ENCODE measurements at regions of chr16 and their contacts with region 1.

Region 1: GRCh38 chr16:3611146-3611975 is at the start of gene SLX4:
- DNase-seq: peak; percentile 88 to 97 (median 95)
- ATAC-seq: peak; percentile 92
- H3K4me3 ChIP-seq: peak within 1 kb of the TSS; percentile 99
- H3K4me3 Mint-ChIP-seq: peak within 1 kb of the TSS; percentile 93 to 100 (median 99)
- H3K27ac ChIP-seq: peak within 1 kb of the TSS; percentile 90
- H3K27ac Mint-ChIP-seq: peak within 1 kb of the TSS; percentile 92 to 99 (median 98)
- H3K4me1 ChIP-seq: peaks cover 18 to 21% of the 10 kb centered on the region in 2 donors
- H3K4me1 Mint-ChIP-seq: peaks cover 37 to 70% (median 62%) of the 10 kb centered on the region in 7 donors
- H3K27me3 ChIP-seq: no peaks in the 10 kb centered on the region
- H3K27me3 Mint-ChIP-seq: no peaks in the 10 kb centered on the region
- total RNA-seq, gene SLX4: 7.1 to 12.5 (median 8.5) TPM

Region 2: DNA sequence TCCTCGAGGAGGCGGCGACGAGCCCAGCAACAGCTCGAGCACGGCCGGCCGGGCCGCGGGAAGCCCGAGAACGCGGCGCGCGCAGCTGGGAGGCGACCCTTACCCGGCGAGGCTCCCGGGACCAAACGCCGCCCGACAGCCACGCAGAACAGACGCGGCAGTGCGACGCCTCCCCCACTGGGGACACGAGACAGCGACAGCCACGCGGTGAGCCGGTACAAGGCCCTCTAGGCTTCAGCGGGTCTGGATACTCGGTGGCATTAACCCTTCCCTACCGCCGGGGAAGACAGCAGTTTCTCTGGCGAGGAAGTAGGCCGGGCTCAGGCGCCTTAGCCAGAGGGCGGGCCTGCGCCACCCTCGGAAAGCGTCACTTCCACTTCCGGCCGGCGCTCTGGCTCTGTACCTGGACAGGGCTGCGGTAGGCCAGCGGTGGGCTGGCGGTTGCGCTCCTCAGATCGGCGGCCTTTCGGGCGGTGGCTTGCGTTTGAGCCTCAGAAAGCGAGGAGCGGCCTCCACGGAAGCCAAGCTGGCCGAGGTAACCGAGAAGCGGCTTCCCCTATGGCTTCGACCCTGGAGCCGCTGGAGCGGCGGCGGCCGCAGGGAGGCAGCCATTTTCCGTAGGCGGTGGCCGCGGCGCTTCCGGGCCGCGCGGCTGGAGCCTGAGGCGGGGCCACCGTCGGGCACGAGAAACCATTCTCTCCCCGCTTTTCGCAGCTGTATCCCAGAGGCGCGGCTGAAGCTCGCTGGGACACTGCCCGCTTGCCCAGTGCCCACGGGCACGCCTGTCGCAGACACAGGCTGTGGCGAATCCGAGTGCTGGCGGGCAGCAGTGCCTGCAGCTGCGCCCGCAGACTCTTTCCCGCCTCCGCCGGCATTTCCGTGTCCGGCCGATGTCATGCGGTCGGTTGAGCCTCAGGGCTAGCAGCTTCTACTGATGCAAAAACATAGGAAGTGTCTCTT is 306.0 kb before region 1 on chr16 and contains the starts of genes TIGD7 and ZNF75A:
- CTCF ChIA-PET with region 1: no interaction called
- POLR2A ChIA-PET with region 1: no interaction called
- intact Hi-C with region 1: loop called in 1 of 2 experiments (anchors 1 kb)
- DNase-seq: peak; percentile 69 to 89 (median 85)
- ATAC-seq: peak; percentile 96
- H3K4me3 ChIP-seq: peak within 1 kb of the TSS; percentile 78
- H3K4me3 Mint-ChIP-seq: peak within 1 kb of the TSS; percentile 78 to 87 (median 84)
- H3K27ac ChIP-seq: peak within 1 kb of the TSS; percentile 87
- H3K27ac Mint-ChIP-seq: peak within 1 kb of the TSS; percentile 62 to 92 (median 83)
- H3K4me1 ChIP-seq: peaks cover 12 to 13% of the 10 kb centered on the region in 2 donors
- H3K4me1 Mint-ChIP-seq: peaks cover 4 to 38% (median 19%) of the 10 kb centered on the region in 7 donors
- H3K27me3 ChIP-seq: no peaks in the 10 kb centered on the region
- H3K27me3 Mint-ChIP-seq: no peaks in the 10 kb centered on the region
- total RNA-seq, gene TIGD7: 4.9 to 18.4 (median 5.5) TPM
- total RNA-seq, gene ZNF75A: 27.7 to 90.6 (median 53.4) TPM

Region 3: DNA sequence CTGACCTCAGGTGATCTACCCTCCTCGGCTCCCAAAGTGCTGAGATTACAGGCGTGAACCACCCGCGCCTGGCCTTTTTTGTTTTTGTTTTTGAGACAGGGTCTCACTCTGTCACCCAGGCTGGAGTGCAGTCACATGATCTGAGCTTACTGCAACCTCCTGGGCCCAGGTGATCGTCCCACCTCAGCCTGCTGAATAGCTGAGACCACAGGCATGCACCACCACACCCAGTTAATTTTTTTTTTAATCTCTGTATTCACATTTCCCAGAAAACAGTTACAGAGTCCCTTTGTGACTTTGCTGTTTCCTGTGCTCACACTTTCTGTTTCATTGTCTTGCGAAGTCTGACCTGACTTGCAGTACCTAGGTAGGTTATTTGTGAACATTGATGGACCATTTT is 107.8 kb before region 1 on chr16:
- CTCF ChIA-PET with region 1: interaction called, 3 read pairs
- POLR2A ChIA-PET with region 1: interaction called, 3 read pairs
- intact Hi-C with region 1: loop called in 1 of 2 experiments (anchors 1 kb)
- DNase-seq: peak in 8 of 9 donors; percentile 50 to 81 (median 70)
- ATAC-seq: peak; percentile 49
- H3K4me3 ChIP-seq: peak overlapping the region; percentile 3
- H3K4me3 Mint-ChIP-seq: peak overlapping the region; percentile 76 to 94 (median 84)
- H3K27ac ChIP-seq: peak overlapping the region; percentile 92
- H3K27ac Mint-ChIP-seq: peak overlapping the region; percentile 90 to 98 (median 95)
- H3K4me1 ChIP-seq: peaks cover 40 to 47% of the 10 kb centered on the region in 2 donors
- H3K4me1 Mint-ChIP-seq: peaks cover 37 to 80% (median 67%) of the 10 kb centered on the region in 7 donors
- H3K27me3 ChIP-seq: no peaks in the 10 kb centered on the region
- H3K27me3 Mint-ChIP-seq: no peaks in the 10 kb centered on the region

Region 4: DNA sequence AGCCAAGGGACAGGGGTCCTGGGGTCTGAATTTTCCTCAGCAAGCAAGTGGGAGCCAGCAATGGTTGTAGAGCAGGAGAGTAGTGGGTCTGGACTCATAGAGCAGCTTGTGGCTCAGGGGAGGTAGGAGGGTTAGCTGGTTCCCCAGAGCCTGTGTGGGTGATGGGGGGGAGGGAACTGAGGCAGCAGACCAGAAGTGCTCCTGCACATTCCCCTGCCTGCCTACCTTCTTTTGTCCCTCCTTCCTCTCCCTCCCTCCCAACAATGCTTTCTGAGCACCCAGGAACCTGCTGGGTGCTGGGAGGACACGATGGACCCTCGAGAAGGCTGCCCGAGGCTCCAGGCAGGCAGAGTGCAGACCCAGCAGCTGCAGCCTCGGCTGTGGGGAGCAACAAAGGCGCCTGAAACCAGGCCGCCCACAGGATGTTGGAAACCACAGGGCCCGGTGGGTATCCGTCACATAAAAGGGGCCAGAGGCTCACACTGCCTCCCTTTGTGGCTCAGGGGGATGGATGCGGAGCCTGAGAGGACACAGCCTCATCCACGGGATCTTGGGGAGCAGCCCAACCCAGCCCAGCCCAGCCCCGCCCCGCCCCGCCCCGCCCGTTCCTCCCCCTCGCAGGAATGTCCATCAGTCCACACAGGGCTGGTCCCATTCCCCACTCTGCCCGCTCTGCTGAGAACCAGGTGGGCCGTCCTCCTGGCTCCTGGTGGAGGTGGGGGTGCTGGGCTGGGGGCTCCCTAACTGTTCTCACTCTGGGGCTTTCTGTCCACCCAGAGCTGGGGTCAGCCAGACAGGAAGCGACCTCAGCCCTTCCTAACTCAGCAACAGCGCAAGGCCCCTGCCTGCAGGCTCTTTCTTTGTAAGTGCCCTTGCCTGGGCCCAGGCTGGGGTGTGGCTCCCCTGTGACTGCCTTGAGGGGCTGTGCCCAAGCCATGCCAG is 32.5 kb before region 1 on chr16:
- CTCF ChIA-PET with region 1: interaction called, 3 read pairs
- POLR2A ChIA-PET with region 1: interaction called, 10 read pairs
- intact Hi-C with region 1: loop called (anchors 1 kb)
- DNase-seq: peak in 5 of 9 donors; percentile 15 to 70 (median 29)
- ATAC-seq: peak; percentile 64
- H3K4me3 ChIP-seq: peak overlapping the region; percentile 39
- H3K4me3 Mint-ChIP-seq: peak overlapping the region; percentile 82 to 100 (median 98)
- H3K27ac ChIP-seq: peak overlapping the region; percentile 90
- H3K27ac Mint-ChIP-seq: peak overlapping the region; percentile 83 to 97 (median 95)
- H3K4me1 ChIP-seq: peaks cover 27 to 36% of the 10 kb centered on the region in 2 donors
- H3K4me1 Mint-ChIP-seq: peaks cover 19 to 59% (median 47%) of the 10 kb centered on the region in 7 donors
- H3K27me3 ChIP-seq: no peaks in the 10 kb centered on the region
- H3K27me3 Mint-ChIP-seq: no peaks in the 10 kb centered on the region

Region 5: DNA sequence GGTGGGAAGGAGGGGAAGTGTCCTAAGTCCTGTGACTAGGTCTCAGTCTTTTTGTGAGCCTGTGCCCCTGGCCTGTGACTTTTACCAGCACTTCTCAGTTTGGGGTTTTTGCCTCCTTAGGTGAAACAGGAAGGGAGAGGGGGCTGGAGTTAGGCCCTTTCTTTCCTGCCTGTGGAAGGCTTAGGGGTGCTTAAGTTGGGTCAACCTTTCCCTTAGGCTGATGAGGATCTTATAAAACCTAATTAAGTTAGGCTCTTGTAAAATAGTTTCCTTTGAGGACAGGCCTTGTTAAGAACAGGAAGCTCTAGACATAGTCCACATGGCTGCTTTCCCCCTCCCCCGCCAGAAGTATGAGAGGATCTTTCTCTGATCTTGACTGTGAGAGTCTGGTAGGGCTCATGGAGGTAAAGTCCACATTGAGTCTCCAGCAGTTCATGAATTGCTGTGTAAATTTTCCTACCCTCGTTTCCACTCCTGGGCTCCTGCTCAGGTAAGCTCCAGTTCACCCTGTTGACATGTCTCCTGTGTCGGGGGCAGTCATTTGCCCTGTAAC is 26.1 kb after region 1 on chr16:
- CTCF ChIA-PET with region 1: no interaction called
- POLR2A ChIA-PET with region 1: interaction called, 4 read pairs
- intact Hi-C with region 1: loop called in 1 of 2 experiments (anchors 1 kb)
- DNase-seq: peak in 7 of 9 donors; percentile 25 to 56 (median 46)
- ATAC-seq: peak; percentile 72
- H3K4me3 ChIP-seq: no peak overlapping the region
- H3K4me3 Mint-ChIP-seq: peak overlapping the region; percentile 21 to 66 (median 53)
- H3K27ac ChIP-seq: peak overlapping the region; percentile 59
- H3K27ac Mint-ChIP-seq: peak overlapping the region; percentile 79 to 93 (median 86)
- H3K4me1 ChIP-seq: peaks cover 4 to 13% of the 10 kb centered on the region in 2 donors
- H3K4me1 Mint-ChIP-seq: peaks cover 28 to 51% (median 39%) of the 10 kb centered on the region in 7 donors
- H3K27me3 ChIP-seq: no peaks in the 10 kb centered on the region
- H3K27me3 Mint-ChIP-seq: no peaks in the 10 kb centered on the region

Region 6: DNA sequence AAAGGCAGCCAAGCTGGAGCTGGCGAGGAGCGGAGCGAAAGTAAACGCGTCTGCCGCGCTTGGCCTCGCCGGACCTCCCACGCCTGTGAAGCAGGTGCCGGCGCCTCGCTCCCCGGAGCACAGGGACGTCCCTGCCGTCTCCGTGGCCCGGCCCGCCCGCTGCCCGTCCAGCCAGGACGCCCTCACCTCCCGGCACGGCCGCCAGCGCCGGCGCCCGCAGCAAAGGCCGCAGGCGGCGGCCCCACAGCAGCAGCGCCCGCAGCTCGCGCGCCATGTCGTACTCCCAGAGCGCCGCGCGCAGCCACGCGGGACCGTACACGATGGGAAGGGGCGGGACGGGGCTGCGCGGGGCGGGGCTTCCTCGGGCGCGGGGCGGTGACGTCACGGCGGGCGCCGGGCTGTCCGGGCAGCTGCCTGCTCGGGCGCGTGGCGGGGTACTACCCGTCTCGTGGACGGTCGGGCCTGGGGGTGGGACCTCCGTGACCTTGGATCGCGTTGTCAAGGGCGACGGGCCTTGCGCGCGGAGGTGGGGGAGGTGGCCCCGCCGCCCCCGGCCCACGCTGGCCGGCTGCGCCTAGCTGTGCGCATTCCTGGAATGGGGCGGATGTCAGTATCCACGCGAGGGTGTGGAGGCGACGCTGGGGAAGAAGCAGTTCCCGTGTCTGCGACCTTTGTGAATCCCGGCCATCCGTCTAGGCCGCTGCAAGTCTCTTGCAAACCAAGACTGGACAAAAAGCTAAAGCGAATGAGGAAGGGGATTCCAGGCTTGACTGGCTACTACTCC is 106.1 kb after region 1 on chr16 and contains the start of gene TRAP1:
- CTCF ChIA-PET with region 1: no interaction called
- POLR2A ChIA-PET with region 1: no interaction called
- intact Hi-C with region 1: loop called in 1 of 2 experiments (anchors 5 kb)
- DNase-seq: peak; percentile 81 to 96 (median 88)
- ATAC-seq: peak; percentile 98
- H3K4me3 ChIP-seq: peak within 1 kb of the TSS; percentile 67
- H3K4me3 Mint-ChIP-seq: peak within 1 kb of the TSS; percentile 81 to 94 (median 89)
- H3K27ac ChIP-seq: peak within 1 kb of the TSS; percentile 94
- H3K27ac Mint-ChIP-seq: peak within 1 kb of the TSS; percentile 67 to 96 (median 92)
- H3K4me1 ChIP-seq: peaks cover 6 to 11% of the 10 kb centered on the region in 2 donors
- H3K4me1 Mint-ChIP-seq: peaks cover 14 to 47% (median 38%) of the 10 kb centered on the region in 7 donors
- H3K27me3 ChIP-seq: no peaks in the 10 kb centered on the region
- H3K27me3 Mint-ChIP-seq: no peaks in the 10 kb centered on the region
- total RNA-seq, gene TRAP1: 96.8 to 138 (median 132) TPM

Region 7: GRCh38 chr16:4116337-4117249 is 505.2 kb after region 1 on chr16 and contains the start of gene ADCY9:
- CTCF ChIA-PET with region 1: no interaction called
- POLR2A ChIA-PET with region 1: no interaction called
- intact Hi-C with region 1: loop called in 1 of 2 experiments (anchors 5 kb)
- DNase-seq: peak; percentile 67 to 89 (median 78)
- ATAC-seq: peak; percentile 95
- H3K4me3 ChIP-seq: peak within 1 kb of the TSS; percentile 65
- H3K4me3 Mint-ChIP-seq: peak within 1 kb of the TSS; percentile 79 to 94 (median 88)
- H3K27ac ChIP-seq: peak within 1 kb of the TSS; percentile 14
- H3K27ac Mint-ChIP-seq: peak within 1 kb of the TSS in 8 of 9 donors; percentile 25 to 82 (median 70)
- H3K4me1 ChIP-seq: peaks cover 13 to 19% of the 10 kb centered on the region in 2 donors
- H3K4me1 Mint-ChIP-seq: peaks cover 31 to 41% (median 38%) of the 10 kb centered on the region in 7 donors
- H3K27me3 ChIP-seq: no peaks in the 10 kb centered on the region
- H3K27me3 Mint-ChIP-seq: peaks cover 0 to 26% (median 0%) of the 10 kb centered on the region in 5 donors
- total RNA-seq, gene ADCY9: 3.9 to 14.3 (median 5.6) TPM

Measured in naive thymus-derived CD4-positive, alpha-beta T cell (primary cell).